Mammary epithelial cell (primary cell): ENCODE measurements at regions of chr9 and their contacts with region 1.

Region 1: GRCh38 chr9:83937911-83938323 is 16.7 kb upstream of the KIF27 start:
- DNase-seq: peak; percentile 61
- H3K4me3 ChIP-seq: no peak overlapping the region
- H3K27ac ChIP-seq: no peak overlapping the region
- H3K4me1 ChIP-seq: peaks cover 32% of the 10 kb centered on the region
- H3K27me3 ChIP-seq: no peaks in the 10 kb centered on the region
- CTCF ChIP-seq: peak; percentile 55 to 65

Region 2: DNA sequence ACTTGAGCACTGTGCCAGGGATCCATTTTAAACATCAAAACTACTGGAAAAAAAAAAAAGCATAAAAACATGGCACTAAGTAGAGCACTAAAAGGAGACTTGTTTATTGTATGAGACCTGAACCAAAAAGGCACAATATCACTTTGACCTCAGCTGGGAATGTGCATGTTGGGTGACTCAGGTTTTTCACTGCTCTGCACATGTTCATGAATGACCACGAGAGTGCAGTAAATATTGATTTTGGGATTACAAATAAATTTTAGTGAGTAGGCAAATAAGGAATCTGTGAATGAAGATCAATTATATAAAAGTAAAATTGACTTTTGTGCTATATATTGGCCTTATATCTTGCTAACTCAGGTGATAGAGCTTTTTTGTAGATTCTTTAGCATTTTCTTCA is 54.5 kb after region 1 on chr9:
- CTCF ChIA-PET with region 1: no interaction called
- dilution Hi-C with region 1: no loop called
- in situ Hi-C with region 1: no loop called
- intact Hi-C with region 1: no loop called
- DNase-seq: no peak
- H3K4me3 ChIP-seq: no peak overlapping the region
- H3K27ac ChIP-seq: no peak overlapping the region
- H3K4me1 ChIP-seq: no peaks in the 10 kb centered on the region
- H3K27me3 ChIP-seq: no peaks in the 10 kb centered on the region
- CTCF ChIP-seq: no peak

Region 3: GRCh38 chr9:84170521-84171141 is 232.7 kb after region 1 on chr9:
- CTCF ChIA-PET with region 1: no interaction called
- dilution Hi-C with region 1: no loop called
- in situ Hi-C with region 1: no loop called
- intact Hi-C with region 1: loop called (anchors 1 kb)
- DNase-seq: peak; percentile 48
- H3K4me3 ChIP-seq: no peak overlapping the region
- H3K27ac ChIP-seq: peak overlapping the region; percentile 54
- H3K4me1 ChIP-seq: peaks cover 15% of the 10 kb centered on the region
- H3K27me3 ChIP-seq: no peaks in the 10 kb centered on the region
- CTCF ChIP-seq: no peak

Region 4: GRCh38 chr9:84261082-84261746 is 323.3 kb after region 1 on chr9:
- CTCF ChIA-PET with region 1: interaction called, 3 read pairs
- dilution Hi-C with region 1: loop called (anchors 25 kb)
- in situ Hi-C with region 1: loop called (anchors 5 to 10 kb)
- intact Hi-C with region 1: loop called (anchors 1 kb)
- DNase-seq: peak; percentile 55
- H3K4me3 ChIP-seq: no peak overlapping the region
- H3K27ac ChIP-seq: no peak overlapping the region
- H3K4me1 ChIP-seq: no peaks in the 10 kb centered on the region
- H3K27me3 ChIP-seq: no peaks in the 10 kb centered on the region
- CTCF ChIP-seq: peak; percentile 95 to 96

Region 5: GRCh38 chr9:84668196-84669012 is 730.5 kb after region 1 on chr9:
- CTCF ChIA-PET with region 1: no interaction called
- dilution Hi-C with region 1: no loop called
- in situ Hi-C with region 1: no loop called
- intact Hi-C with region 1: loop called (anchors 5 kb)
- DNase-seq: peak; percentile 74
- H3K4me3 ChIP-seq: peak overlapping the region; percentile 12 to 50 (median 46)
- H3K27ac ChIP-seq: no peak overlapping the region
- H3K4me1 ChIP-seq: peaks cover 31% of the 10 kb centered on the region
- H3K27me3 ChIP-seq: peaks cover 10% of the 10 kb centered on the region
- CTCF ChIP-seq: peak; percentile 54 to 57